ENCODE measurements at regions of chr15 and their contacts with region 1.

Region 1: GRCh38 chr15:39429898-39430357 is 151.0 kb upstream of the THBS1 start:
- DNase-seq: peak; percentile 99
- H3K4me3 ChIP-seq: no peak overlapping the region
- H3K27ac ChIP-seq: peak overlapping the region; percentile 98
- H3K4me1 ChIP-seq: peaks cover 52% of the 10 kb centered on the region
- H3K27me3 ChIP-seq: no peaks in the 10 kb centered on the region
- CTCF ChIP-seq: no peak
- POLR2A ChIP-seq: peak; percentile 75

Region 2: DNA sequence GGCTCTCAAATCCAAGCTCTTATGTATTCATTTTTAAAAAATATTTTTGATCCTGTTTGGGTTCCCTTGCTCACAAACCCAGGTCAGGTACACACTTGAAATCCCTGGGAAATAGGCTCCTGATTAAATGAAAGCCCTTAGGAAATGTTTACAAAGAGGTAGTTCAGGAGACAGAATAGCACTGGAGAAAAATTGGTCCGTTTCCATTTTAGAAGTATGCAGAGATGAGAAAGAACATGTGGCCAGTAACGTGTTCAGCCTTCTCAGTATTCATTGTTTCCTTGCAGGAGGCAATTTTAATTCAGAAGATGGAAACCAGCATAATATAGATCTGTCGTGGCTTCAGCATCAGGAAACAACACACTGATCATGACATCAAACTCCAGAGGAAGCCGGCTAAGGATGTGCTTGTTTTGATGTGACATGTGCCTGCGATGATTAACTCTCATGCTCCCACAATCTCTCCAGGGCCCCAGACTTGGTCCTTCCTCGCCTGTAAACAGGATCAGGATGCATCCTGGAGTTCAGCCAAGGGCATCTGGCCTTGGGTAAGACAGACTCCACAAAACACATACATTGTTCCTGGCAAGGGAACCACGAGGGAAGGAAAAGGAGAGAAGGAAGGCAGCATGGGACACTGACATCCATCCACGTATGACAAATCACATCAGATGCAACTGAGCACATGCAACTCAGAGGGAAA is 199.6 kb before region 1 on chr15:
- CTCF ChIA-PET with region 1: no interaction called
- POLR2A ChIA-PET with region 1: no interaction called
- dilution Hi-C with region 1: no loop called
- intact Hi-C with region 1: loop called (anchors 1 kb)
- DNase-seq: peak; percentile 100
- H3K4me3 ChIP-seq: no peak overlapping the region
- H3K27ac ChIP-seq: peak overlapping the region; percentile 93
- H3K4me1 ChIP-seq: peaks cover 49% of the 10 kb centered on the region
- H3K27me3 ChIP-seq: no peaks in the 10 kb centered on the region
- CTCF ChIP-seq: no peak
- POLR2A ChIP-seq: no peak

Region 3: GRCh38 chr15:39260391-39260790 is 169.5 kb before region 1 on chr15:
- CTCF ChIA-PET with region 1: interaction called, 3 read pairs
- POLR2A ChIA-PET with region 1: interaction called, 3 read pairs
- dilution Hi-C with region 1: no loop called
- intact Hi-C with region 1: loop called (anchors 1 kb)
- DNase-seq: no peak
- H3K4me3 ChIP-seq: no peak overlapping the region
- H3K27ac ChIP-seq: peak overlapping the region; percentile 95
- H3K4me1 ChIP-seq: peaks cover 32% of the 10 kb centered on the region
- H3K27me3 ChIP-seq: no peaks in the 10 kb centered on the region
- CTCF ChIP-seq: no peak
- POLR2A ChIP-seq: no peak

Region 4: DNA sequence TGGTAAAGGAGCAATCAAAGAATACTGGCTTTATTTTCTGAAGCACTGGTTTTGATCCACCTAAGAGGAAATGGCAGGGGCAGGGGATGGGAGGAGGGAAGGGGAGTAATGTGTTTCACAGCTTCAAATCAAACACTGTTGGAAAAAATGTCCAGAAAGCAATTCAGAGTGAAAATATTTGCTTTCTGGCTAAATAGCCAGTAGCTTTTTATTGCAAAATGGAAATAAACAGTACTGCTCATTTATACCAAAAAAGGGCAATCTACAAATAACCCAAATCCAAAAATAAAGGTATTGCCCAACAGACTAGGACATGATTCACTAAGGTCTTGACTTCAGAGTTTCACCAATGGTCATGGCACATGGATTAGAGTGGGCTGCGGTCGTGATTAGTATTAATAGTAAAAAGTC is 128.3 kb before region 1 on chr15:
- CTCF ChIA-PET with region 1: no interaction called
- POLR2A ChIA-PET with region 1: no interaction called
- dilution Hi-C with region 1: no loop called
- intact Hi-C with region 1: loop called (anchors 1 kb)
- DNase-seq: peak; percentile 37
- H3K4me3 ChIP-seq: no peak overlapping the region
- H3K27ac ChIP-seq: peak overlapping the region; percentile 92
- H3K4me1 ChIP-seq: peaks cover 31% of the 10 kb centered on the region
- H3K27me3 ChIP-seq: no peaks in the 10 kb centered on the region
- CTCF ChIP-seq: no peak
- POLR2A ChIP-seq: no peak

Region 5: DNA sequence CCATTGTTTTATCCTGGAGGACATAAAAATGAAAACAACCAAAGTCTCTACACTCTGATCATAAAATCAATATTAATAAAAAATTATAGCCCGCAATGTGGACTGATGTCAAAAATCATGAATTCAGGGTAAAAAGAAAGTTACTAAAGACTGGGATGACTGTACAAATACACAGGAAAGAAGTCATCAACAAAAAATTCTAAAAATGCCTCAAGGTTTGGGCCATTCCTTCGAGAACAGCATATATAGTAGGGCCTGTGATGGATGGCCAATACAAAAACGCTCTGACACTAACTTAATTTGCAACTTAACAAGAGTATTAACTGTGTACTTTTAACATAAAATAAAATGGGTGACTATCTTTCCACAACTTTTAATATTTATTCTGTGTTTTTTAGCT is 227.8 kb after region 1 on chr15:
- CTCF ChIA-PET with region 1: no interaction called
- POLR2A ChIA-PET with region 1: no interaction called
- dilution Hi-C with region 1: no loop called
- intact Hi-C with region 1: no loop called
- DNase-seq: peak; percentile 53
- H3K4me3 ChIP-seq: no peak overlapping the region
- H3K27ac ChIP-seq: peak overlapping the region; percentile 45
- H3K4me1 ChIP-seq: peaks cover 14% of the 10 kb centered on the region
- H3K27me3 ChIP-seq: no peaks in the 10 kb centered on the region
- CTCF ChIP-seq: no peak
- POLR2A ChIP-seq: no peak

Measured in endothelial cell of umbilical vein (primary cell).